ENCODE measurements at regions of chr19 and their contacts with region 1.

Region 1: GRCh38 chr19:41872775-41873647 is 4.1 kb upstream of the CD79A start:
- DNase-seq: peak; percentile 80
- H3K4me3 Mint-ChIP-seq: no peak overlapping the region
- H3K27ac Mint-ChIP-seq: peak overlapping the region; percentile 99
- H3K4me1 Mint-ChIP-seq: peaks cover 98% of the 10 kb centered on the region
- H3K27me3 Mint-ChIP-seq: no peaks in the 10 kb centered on the region

Region 2: DNA sequence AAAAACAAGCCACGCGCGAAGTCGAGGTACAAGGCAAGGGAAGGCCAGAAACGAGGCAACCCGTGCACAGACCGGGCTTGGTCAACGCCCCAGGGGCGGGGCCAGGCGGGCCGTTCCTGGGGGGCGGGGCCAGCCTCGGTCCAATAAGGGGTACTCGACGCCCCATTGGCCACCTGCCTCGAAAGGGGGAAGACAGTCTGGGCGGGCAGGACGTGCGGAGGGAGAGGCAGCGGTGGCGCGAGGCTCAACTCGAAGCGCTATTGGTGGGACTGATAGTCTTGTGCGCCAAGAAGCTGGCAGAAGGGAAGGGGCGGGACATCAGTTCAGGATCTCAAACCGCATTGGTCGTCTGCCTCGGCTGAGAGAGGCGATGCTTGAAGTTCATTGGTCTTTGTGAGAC is 28.4 kb before region 1 on chr19 and contains the start of gene LYPD4:
- CTCF ChIA-PET with region 1: no interaction called
- DNase-seq: no peak
- H3K4me3 Mint-ChIP-seq: no peak within 1 kb of the TSS
- H3K27ac Mint-ChIP-seq: no peak within 1 kb of the TSS
- H3K4me1 Mint-ChIP-seq: no peaks in the 10 kb centered on the region
- H3K27me3 Mint-ChIP-seq: peaks cover 42% of the 10 kb centered on the region

Region 3: DNA sequence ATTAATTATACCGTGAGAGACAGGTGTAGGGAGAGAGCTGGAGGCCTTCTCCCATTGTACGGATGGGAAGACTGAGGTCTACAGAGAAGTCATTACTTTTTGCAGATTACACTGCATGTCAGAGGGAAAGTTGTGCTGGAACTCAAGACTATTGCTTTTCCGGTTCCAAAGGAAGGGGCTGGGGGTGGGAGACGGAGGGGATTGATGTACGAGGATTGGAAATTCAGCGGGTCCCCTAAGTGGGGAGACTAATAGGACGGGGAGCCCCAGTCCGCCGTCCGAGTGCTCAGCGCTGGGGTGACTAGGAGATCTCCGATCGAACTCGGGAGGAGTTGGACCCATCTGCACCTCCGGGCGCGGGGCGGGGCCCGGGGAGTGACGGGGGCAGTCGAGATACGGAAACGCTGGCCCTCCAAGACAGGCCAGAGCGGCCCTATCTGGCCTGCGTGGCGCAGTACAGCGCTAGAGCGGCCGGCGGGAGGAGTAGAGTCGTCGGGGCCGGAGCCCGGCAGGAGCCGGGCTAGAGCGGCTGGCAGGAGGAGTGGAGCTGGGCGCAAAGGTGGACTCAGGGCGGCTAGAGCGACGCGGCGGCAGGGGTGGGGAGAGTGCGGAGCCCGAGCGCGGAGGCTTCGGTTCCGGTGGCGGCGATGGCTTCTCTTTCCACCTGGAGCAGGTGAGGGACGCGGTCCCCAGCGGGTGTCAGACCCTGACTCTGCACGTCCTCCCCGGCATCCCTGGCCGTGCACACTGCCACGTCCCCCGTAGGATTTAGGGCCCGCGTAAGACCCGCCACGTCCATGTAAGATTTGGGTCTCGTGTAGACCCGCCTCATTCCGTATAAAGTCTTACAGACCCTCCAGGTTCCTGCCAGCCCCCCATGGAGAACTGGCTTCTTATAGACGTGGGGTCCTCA is 11.1 kb after region 1 on chr19:
- CTCF ChIA-PET with region 1: interaction called, 66 read pairs
- DNase-seq: peak; percentile 93
- H3K4me3 Mint-ChIP-seq: peak overlapping the region; percentile 89
- H3K27ac Mint-ChIP-seq: peak overlapping the region; percentile 91
- H3K4me1 Mint-ChIP-seq: peaks cover 64% of the 10 kb centered on the region
- H3K27me3 Mint-ChIP-seq: no peaks in the 10 kb centered on the region

Region 4: DNA sequence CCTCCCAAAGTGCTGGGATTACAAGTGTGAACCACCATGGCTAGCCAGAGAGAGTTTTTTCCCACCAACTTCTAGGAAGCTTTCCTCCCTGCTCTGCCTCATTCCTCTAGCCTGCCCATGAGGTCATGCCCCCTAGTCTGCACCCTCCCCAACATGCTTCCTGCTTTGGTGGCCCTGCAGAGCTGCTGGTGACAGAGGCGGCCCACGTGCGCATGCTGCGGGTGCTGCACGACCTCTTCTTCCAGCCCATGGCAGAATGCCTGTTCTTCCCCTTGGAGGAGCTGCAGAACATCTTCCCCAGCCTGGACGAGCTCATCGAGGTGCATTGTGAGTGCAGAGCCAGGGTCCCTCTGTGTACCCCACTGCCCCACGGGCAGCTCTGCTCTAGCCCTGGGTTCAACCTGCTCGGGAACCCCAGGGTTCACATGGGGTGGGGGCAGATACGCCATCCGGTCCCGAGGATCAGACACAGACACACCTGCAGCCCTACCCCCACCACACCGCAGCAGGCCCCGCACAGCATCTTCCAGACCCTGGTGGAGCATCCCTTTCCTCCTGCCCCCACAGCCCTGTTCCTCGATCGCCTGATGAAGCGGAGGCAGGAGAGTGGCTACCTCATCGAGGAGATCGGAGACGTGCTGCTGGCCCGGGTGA is 28.8 kb after region 1 on chr19:
- CTCF ChIA-PET with region 1: interaction called, 13 read pairs
- DNase-seq: no peak
- H3K4me3 Mint-ChIP-seq: no peak overlapping the region
- H3K27ac Mint-ChIP-seq: peak overlapping the region; percentile 45
- H3K4me1 Mint-ChIP-seq: peaks cover 31% of the 10 kb centered on the region
- H3K27me3 Mint-ChIP-seq: no peaks in the 10 kb centered on the region

Region 5: DNA sequence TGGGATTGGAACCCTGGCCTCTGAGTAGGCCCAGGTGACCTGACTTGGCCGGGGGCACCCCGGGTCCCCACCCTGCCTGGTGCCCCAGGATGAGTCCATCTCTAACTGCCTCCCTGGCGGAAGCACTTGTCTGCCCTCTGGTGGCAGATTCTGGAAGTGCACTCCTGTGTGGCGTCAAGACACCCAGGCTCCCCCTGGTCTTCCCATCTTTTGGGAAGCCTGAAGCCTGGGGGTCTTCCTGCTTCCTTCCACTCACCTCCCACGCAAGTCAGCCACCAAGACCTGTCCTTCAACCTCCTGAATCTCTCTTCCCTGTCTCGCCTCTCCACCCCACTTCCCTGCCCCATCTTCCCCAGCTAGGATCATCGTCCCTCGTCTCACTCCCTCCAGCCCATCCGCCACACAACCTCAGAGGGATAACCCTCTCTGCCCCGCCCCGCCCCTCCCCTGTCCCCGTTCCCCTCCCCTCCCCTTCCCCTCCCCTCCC is 78.7 kb after region 1 on chr19:
- CTCF ChIA-PET with region 1: interaction called, 30 read pairs
- DNase-seq: peak; percentile 93
- H3K4me3 Mint-ChIP-seq: no peak overlapping the region
- H3K27ac Mint-ChIP-seq: peak overlapping the region; percentile 16
- H3K4me1 Mint-ChIP-seq: peaks cover 13% of the 10 kb centered on the region
- H3K27me3 Mint-ChIP-seq: peaks cover 5% of the 10 kb centered on the region